BJ (cell line): ENCODE measurements at regions of chr4 and their contacts with region 1.

Region 1: DNA sequence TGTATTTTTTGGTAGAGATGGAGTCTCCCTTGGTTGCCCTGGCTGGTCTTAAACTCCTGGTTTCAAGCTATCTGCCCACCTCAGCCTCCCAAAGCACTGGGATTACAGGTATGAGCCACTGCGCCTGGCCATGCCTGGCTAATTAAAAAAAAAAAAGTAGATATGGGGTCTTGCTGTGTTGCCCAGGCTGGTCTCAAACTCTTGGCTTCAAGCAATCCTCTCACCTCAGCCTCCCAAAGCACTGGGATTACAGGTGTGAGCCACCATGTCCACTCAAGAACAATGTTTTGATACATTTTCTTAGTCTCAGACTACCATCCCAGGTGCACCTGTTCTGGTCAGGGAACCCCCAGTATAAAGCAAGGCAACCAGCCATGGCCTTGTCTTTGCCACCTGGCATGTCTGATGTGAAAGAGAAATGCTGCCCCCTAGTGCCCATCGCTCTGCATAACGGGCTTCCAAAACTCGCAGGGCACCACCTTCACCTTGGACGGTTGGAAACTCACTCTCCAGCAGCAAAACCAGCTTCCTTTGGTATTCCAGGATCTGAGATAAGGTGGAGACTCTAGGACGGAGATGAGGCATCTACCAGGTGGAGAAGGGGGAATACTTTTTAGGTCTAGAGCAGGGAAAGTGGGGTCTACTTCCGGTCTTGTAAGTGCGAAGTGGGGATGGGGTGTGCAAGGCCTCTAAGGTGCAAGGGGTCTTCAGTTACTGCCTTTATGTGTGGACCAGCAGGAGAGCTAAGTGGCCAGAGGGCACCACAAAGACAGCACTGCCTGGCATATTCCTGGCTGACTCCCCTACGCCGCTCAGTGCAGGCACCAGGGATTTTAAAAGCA is 47.7 kb upstream of the AFAP1 start:
- DNase-seq: no peak
- H3K4me3 ChIP-seq: no peak overlapping the region
- H3K27me3 ChIP-seq: no peaks in the 10 kb centered on the region; the same call in 1 of the 2 replicates
- CTCF ChIP-seq: peak; percentile 87

Region 2: DNA sequence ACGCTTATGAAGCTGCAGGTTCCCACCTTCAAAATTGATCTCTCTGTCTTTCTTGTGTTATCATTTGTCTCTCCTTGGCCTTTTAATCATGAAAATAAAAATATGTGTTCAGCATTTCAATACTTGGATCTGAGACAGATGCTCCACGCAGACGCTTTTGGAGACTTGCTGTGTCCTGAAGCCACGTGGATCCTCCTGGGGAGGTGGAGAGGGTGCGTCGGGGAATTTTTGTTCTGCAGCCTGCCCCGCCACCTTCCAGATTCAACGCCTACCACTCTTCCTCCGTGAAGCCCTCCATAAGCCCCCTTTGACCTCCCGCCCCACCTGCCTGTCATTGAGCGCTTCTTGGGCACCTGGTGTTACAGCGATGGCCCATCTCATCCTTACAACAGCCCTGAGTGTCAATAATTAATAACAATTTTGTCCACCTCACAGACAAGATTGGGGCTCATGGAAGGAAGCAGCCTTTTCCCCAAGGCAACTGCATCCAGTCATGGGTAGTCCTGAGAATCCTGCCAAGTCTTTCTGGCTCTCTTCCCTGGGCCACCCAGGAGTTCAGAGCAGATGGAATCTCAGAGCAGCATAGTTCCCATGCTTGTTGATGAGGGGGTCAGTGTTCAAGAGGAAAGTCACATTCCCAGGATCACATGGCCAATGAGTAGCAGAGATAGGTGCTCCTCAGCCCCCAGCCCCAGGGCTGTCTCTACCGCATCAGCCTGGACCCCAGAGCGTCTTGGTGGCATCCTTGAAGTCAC is 380.0 kb before region 1 on chr4:
- CTCF ChIA-PET with region 1: no interaction called
- POLR2A ChIA-PET with region 1: no interaction called
- DNase-seq: no peak
- H3K4me3 ChIP-seq: no peak overlapping the region
- H3K27me3 ChIP-seq: peaks cover 1% of the 10 kb centered on the region; the same call in 1 of the 2 replicates
- CTCF ChIP-seq: no peak

Region 3: GRCh38 chr4:7770224-7771050 is 216.9 kb before region 1 on chr4:
- CTCF ChIA-PET with region 1: interaction called, 28 read pairs
- POLR2A ChIA-PET with region 1: no interaction called
- DNase-seq: no peak
- H3K4me3 ChIP-seq: no peak overlapping the region
- H3K27me3 ChIP-seq: no peaks in the 10 kb centered on the region
- CTCF ChIP-seq: peak; percentile 68

Region 4: DNA sequence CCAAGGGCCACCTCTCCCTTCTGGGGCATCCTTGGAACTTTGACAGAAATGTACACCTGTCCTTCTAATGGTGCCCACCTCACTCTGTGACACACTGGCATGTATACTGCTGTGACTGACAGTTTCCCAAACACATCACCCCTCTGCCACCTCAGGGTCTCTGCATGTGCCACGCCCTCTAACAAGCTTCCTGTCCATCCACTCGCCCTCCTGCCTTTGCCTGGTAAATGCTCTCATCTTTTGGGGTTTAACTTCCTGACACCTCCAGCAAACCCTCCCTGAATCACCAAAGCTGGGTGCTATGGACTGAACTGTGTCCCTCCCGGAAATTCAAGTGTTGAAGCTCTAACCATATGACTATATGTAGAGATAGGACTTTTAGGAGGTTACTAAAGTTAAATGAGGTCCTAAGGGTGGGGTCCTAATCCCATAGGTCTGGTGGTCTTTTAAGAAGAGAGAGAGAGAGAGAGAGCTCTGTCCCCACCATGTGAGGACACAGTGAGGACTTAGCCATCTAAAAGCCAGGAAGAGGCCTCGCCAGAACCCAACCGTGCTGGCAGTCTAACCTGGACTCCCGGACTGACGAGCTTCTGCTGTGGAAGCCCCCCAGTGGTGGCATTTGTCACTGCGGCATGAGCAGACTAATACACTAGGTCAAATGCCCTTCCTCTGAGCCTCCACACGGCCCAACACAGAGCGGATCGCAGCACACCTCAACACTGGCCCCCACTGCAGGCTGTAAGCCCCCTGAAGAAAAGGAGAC is 143.4 kb before region 1 on chr4:
- CTCF ChIA-PET with region 1: interaction called, 10 read pairs
- POLR2A ChIA-PET with region 1: interaction called, 4 read pairs
- DNase-seq: no peak
- H3K4me3 ChIP-seq: no peak overlapping the region
- H3K27me3 ChIP-seq: no peaks in the 10 kb centered on the region
- CTCF ChIP-seq: peak; percentile 62

Region 5: DNA sequence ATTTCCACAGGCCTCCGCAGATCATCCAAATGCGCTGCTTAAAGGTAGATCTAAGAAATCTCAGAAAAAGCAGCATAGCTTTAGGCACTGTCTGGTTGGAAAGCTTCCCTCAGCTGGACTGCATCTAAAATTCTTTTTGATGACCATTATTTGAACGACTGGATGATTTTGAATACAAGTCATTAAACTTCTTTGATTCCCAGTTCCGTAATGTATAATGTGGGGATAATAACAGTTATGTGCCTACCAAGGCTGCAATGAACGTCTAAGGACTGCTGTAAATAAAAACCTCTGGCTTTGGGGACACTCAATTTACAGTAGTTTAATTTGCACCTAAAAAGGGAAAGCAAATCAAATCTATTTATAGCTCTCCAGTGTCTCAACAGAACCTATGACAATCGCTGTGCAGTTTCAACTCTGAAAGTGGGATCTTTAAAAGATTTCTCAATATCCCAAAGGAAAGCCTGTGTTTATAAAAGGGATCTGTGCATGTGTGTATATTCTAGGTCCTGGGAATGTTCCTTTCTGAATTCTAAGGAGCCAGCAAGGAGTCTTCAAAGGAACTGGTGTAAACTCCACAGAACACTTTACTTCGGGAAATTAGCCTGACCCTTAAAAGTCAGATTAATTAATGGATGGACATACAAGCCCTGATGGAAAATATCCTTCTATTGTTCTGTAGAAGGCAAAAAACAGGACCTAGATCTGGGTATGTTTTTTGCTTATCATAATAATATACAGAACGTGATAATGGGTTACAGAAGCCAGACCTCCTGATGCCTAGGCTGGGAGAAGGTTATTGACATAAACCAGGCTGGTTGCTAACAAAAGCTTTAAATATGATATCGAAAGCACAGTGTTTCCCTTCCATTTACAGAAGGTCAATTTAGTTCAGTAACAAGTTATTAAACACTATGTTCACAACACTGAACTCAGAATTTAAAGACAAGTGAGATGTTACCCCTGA is 101.1 kb before region 1 on chr4:
- CTCF ChIA-PET with region 1: no interaction called
- POLR2A ChIA-PET with region 1: no interaction called
- DNase-seq: no peak
- H3K4me3 ChIP-seq: no peak overlapping the region
- H3K27me3 ChIP-seq: no peaks in the 10 kb centered on the region
- CTCF ChIP-seq: no peak

Region 6: GRCh38 chr4:7899184-7899869 is 88.0 kb before region 1 on chr4:
- CTCF ChIA-PET with region 1: no interaction called
- POLR2A ChIA-PET with region 1: interaction called, 28 read pairs
- DNase-seq: no peak
- H3K4me3 ChIP-seq: no peak overlapping the region
- H3K27me3 ChIP-seq: no peaks in the 10 kb centered on the region
- CTCF ChIP-seq: no peak

Region 7: DNA sequence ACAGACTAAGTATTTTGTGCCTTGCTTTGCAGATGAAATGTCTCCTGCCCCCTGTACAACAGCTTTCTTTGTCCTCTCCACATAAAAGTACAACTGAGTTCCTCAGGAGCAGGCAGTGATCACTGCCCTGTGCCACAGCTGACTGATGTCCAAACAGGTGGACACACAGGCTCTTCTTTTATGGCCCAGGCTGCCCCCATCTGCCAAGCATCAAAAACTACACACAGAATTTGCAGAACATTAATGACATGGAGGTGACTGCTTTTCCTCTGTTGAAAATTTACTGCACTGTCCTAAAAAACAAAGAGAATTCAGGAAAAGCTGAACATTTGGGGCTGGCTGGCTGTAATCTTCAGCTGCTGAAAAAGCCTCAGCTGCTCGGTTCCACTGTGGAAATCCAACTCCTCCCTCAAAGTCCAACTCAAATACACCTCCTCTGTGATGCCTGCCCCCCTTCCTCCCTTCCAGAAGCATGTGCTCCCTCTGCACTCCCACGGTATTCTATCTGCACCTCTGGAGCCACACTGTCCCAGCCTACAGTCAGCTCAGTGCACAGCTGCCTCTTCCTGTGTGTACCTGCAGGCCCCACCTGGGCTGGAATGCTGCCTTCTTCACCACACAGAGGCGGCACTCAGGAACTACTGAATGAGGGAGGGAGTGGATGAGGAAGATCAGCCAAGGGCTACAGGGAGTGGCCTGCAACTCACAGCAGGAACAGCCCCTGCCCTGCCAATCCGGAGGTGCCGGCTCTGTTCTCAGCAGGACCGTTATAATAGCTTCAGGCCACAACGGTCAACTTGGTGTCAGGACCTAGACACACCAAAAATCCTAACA is 58.0 kb before region 1 on chr4:
- CTCF ChIA-PET with region 1: interaction called, 11 read pairs
- POLR2A ChIA-PET with region 1: no interaction called
- DNase-seq: no peak
- H3K4me3 ChIP-seq: no peak overlapping the region
- H3K27me3 ChIP-seq: no peaks in the 10 kb centered on the region
- CTCF ChIP-seq: peak; percentile 39

Region 8: DNA sequence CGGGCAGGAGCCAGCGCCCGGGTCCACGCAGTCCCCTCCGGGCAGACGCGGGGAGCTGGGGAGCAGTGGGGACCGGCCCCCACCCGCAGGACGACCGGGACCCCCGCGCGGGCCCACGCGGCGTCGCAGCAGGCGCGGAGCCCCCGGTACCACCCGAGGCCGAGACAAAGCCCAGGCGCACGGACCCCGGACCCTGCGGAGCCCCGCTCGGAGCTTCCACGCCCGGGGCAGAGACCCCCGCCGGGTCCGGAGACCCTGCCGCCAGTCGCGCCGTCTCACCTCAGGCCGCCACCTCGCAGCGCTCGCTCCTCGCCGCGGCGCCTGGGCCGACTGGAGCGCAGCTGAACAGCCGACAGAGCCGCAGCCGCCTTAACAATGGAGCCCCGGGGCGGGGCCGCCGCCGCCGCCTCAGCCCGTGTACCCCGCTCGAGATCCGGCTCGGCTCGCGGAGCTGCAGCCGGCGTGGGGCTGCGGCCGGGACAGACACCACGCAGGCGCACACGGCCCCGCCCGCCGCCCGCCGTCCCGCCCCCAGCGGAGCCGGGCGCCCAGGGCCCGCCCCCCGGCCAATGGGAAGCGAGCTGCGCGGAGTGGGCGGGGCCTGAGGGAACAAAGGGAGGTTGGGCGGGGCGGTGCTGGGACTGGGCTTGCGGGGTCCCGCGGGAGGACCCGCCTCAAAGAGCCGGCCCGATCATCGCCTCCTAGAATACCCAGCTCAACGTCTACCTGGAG is 47.8 kb before region 1 on chr4 and contains the start of gene AFAP1:
- CTCF ChIA-PET with region 1: interaction called, 13 read pairs
- POLR2A ChIA-PET with region 1: no interaction called
- DNase-seq: peak; percentile 29
- H3K4me3 ChIP-seq: peak within 1 kb of the TSS; percentile 59
- H3K27me3 ChIP-seq: no peaks in the 10 kb centered on the region
- CTCF ChIP-seq: no peak
- polyA plus RNA-seq, gene AFAP1: 28.9 and 48.5 TPM in 2 replicates

Region 9: DNA sequence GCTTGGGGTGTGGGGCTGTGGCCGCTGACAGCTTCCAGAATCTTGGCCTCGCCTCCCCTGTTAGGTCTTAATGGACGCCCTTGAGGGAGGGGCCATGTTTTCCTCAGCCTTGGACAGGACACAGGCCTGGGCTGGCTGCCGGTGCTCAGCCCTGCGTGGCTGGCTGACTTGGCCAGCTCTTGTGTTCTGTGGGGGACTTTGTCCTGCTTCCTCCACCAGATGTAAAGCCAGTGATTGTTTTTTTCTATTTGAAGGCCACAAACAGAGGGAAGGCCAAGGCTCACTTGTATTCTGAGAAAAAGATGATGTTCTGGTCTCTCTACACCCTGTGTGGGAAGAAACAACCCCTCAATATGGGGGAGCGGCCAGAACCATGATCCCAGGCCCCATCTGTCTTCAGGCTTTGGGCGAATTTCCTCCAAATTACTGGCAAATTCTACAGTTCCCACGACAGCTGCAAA is 353.4 kb after region 1 on chr4:
- CTCF ChIA-PET with region 1: no interaction called
- POLR2A ChIA-PET with region 1: no interaction called
- DNase-seq: no peak
- H3K4me3 ChIP-seq: no peak overlapping the region
- H3K27me3 ChIP-seq: no peaks in the 10 kb centered on the region
- CTCF ChIP-seq: no peak